ENCODE measurements at regions of chr17 and their contacts with region 1.

Region 1: DNA sequence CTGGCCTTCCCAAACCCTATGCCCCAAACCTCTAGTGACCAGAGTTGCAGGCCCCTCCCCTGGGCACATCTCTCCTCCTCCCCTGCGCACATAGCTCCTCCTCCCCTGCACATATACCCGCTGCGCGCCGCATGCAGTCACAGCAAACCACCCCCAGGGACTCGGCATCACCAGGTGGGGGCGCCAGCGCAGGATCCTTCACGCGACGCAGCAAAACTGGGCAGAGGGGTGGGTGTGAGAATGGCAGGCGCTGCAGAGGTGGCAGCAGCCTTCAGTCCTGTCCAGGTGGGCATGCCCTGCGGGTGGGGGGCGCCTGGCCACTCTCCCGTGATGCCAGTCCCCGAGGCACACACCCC is 5.6 kb downstream of the CORO6 start:
- DNase-seq: peak; percentile 90
- CTCF ChIP-seq: peak; percentile 92

Region 2: DNA sequence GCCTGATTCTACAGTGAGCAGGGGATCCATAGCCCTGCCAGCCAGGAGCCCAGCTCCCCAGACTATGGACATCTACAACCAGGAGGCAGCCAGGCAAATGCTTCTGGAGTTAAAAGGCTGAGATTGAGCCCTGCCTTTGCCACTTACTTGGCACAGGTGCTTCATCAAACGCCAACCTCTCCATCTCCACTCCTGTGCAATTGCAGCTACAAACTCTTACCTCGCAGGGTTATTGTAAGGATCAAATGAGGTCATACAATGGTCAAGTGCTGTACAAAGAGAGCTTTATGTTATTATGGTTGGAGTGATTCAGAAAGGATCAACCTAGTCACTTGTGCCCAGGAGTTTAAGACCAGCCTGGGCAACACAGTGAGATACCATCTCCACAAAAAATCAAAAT is 427.1 kb before region 1 on chr17:
- CTCF ChIA-PET with region 1: no interaction called
- POLR2A ChIA-PET with region 1: no interaction called
- DNase-seq: no peak
- CTCF ChIP-seq: no peak

Region 3: DNA sequence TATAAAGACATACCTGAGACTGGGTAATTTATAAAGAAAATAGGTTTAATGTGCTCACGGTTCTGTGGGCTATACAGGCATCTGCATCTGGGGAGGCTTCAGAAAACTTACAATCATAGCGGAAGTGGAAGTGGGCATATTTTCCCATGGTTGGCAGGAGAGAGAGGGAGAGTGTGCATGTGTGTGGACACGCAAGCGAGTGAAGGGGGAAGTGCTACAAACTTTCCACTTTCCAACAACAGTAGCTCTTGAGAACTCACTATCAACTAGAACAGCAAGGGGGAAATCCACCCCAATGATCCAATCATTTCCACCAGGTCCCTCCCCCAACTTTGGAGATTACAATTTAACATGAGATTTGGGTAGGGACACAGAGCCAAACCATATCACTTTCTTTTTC is 215.8 kb before region 1 on chr17:
- CTCF ChIA-PET with region 1: no interaction called
- POLR2A ChIA-PET with region 1: no interaction called
- DNase-seq: no peak
- CTCF ChIP-seq: no peak

Region 4: GRCh38 chr17:29589524-29590410 is 27.3 kb before region 1 on chr17 and contains the start of gene GIT1:
- CTCF ChIA-PET with region 1: interaction called, 80 read pairs
- POLR2A ChIA-PET with region 1: interaction called, 5 read pairs
- DNase-seq: peak; percentile 95
- CTCF ChIP-seq: no peak

Region 5: DNA sequence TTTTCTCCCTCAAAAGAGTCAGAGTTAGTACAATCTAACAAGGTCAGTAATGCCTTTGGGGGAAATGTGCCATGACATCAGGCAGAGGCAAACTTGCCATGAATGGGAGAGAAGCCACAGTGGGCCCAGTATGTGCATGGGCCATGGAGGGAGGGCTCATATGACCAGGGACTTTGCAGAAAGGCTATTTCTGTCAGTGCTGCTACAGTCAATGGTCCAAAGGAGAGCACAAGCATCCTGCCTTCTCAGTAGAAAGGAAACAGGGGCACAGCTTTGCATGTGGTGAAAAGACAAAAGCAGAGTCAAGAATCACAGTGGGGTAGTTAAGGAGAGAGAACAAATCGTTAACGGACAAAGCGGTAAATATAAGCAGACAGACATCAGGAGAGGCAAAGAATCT is 16.8 kb after region 1 on chr17:
- CTCF ChIA-PET with region 1: interaction called, 64 read pairs
- POLR2A ChIA-PET with region 1: interaction called, 3 read pairs
- DNase-seq: no peak
- CTCF ChIP-seq: no peak

Region 6: GRCh38 chr17:29699283-29699682 is 82.2 kb after region 1 on chr17:
- CTCF ChIA-PET with region 1: interaction called, 11 read pairs
- POLR2A ChIA-PET with region 1: no interaction called
- DNase-seq: no peak
- CTCF ChIP-seq: no peak

Region 7: GRCh38 chr17:29789196-29790170 is 172.4 kb after region 1 on chr17:
- CTCF ChIA-PET with region 1: interaction called, 10 read pairs
- POLR2A ChIA-PET with region 1: no interaction called
- DNase-seq: no peak
- CTCF ChIP-seq: no peak

Region 8: DNA sequence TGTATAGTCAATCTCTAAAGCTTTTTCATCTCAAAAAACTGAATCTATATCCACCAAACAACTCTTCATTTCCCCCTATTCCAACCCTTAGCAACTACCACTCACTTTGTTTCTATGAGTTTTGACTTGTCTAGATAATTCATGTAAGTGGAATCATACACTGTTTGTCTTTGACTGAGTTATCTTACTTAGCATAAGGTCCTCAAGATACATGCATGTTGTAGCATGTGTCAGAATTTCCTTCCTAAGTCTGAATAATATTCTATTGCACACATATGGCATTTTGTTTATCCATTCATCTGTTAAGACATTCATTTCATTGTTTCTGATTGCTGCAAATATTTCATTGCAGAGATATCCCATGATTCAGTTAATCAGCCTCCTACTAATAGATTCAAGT is 240.7 kb after region 1 on chr17:
- CTCF ChIA-PET with region 1: no interaction called
- POLR2A ChIA-PET with region 1: no interaction called
- DNase-seq: no peak
- CTCF ChIP-seq: no peak